MCF 10A (cell line): ENCODE measurements at regions of chrX and their contacts with region 1.

Region 1: GRCh38 chrX:54639346-54640102 is 109.5 kb downstream of the GNL3L start:
- DNase-seq: peak; percentile 94
- H3K4me3 Mint-ChIP-seq: peak overlapping the region; percentile 78
- H3K27ac Mint-ChIP-seq: peak overlapping the region; percentile 96
- H3K4me1 Mint-ChIP-seq: peaks cover 6% of the 10 kb centered on the region
- H3K27me3 Mint-ChIP-seq: no peaks in the 10 kb centered on the region
- CTCF ChIP-seq: peak; percentile 45

Region 2: GRCh38 chrX:54708404-54708803 is 68.9 kb after region 1 on chrX:
- CTCF ChIA-PET with region 1: no interaction called
- POLR2A ChIA-PET with region 1: no interaction called
- intact Hi-C with region 1: no loop called
- DNase-seq: no peak
- H3K4me3 Mint-ChIP-seq: no peak overlapping the region
- H3K27ac Mint-ChIP-seq: no peak overlapping the region
- H3K4me1 Mint-ChIP-seq: no peaks in the 10 kb centered on the region
- H3K27me3 Mint-ChIP-seq: peaks cover 54% of the 10 kb centered on the region
- CTCF ChIP-seq: no peak

Region 3: DNA sequence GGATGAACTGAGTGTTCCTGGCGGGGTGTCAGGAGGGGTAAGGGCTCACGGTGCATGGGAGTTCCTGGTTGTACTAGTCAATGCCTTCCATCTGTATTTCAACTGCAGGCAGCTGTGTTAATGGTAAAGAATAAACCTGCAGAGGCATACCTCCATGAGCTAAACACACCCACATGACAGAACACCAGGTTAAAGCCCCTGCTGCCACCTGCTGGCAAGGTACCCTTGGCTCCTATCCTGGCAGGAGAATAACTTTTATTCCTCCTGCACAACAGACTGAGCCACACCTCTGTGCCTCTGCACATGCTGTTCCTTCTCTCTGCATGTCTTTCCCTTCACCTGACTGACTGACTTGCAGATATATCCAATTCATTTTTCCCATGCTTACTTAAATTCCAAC is 147.4 kb after region 1 on chrX:
- CTCF ChIA-PET with region 1: interaction called, 5 read pairs
- POLR2A ChIA-PET with region 1: interaction called, 3 read pairs
- intact Hi-C with region 1: loop called (anchors 1 kb)
- DNase-seq: peak; percentile 32
- H3K4me3 Mint-ChIP-seq: no peak overlapping the region
- H3K27ac Mint-ChIP-seq: no peak overlapping the region
- H3K4me1 Mint-ChIP-seq: no peaks in the 10 kb centered on the region
- H3K27me3 Mint-ChIP-seq: peaks cover 49% of the 10 kb centered on the region
- CTCF ChIP-seq: peak; percentile 37

Region 4: DNA sequence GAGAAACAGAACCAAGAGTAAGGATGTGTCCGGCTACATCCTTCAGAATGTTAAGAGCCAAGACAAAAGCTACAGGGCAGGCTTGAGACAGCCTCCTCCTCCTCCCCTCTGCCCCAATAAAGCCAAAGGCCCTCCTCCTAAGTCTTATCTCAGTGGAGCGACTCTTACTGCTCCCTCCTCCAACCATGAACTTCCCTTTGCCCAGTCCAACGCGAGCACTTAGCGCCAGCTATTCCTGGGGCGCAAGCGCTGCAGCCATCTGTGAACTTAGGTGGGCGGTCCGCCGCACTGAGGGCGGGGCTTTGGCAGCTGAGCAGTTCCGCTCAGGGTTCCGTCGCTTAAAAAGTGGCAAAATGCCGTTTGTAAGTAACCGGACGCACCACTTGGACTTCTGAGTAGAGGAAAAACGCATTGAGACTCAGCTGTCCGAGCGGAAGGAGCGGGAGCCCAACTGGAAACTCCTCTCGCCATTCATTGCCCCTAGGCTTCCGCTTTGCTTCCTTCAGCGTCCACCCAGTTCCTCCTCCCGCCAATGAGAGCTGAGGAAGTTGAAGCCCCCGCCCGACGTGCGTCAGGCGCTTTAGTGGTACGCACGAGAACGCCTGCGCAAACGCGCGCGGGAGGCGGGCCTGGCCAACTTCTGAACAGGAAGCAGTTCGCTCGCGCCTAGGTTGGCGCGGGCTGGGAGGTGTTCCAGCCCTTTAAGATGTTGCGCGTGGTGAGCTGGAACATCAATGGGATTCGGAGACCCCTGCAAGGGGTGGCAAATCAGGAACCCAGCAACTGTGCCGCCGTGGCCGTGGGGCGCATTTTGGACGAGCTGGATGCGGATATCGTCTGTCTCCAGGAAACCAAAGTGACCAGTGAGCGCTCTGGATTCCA is 360.4 kb after region 1 on chrX and contains the start of gene APEX2:
- CTCF ChIA-PET with region 1: interaction called, 14 read pairs
- POLR2A ChIA-PET with region 1: interaction called, 26 read pairs
- intact Hi-C with region 1: no loop called
- DNase-seq: peak; percentile 87
- H3K4me3 Mint-ChIP-seq: peak within 1 kb of the TSS; percentile 77
- H3K27ac Mint-ChIP-seq: peak within 1 kb of the TSS; percentile 93
- H3K4me1 Mint-ChIP-seq: no peaks in the 10 kb centered on the region
- H3K27me3 Mint-ChIP-seq: peaks cover 26% of the 10 kb centered on the region
- CTCF ChIP-seq: no peak
- total RNA-seq, gene APEX2: 11.8 and 14.0 TPM in 2 replicates